CD4-positive, alpha-beta T cell (primary cell): ENCODE measurements at regions of chr6 and their contacts with region 1.

Region 1: DNA sequence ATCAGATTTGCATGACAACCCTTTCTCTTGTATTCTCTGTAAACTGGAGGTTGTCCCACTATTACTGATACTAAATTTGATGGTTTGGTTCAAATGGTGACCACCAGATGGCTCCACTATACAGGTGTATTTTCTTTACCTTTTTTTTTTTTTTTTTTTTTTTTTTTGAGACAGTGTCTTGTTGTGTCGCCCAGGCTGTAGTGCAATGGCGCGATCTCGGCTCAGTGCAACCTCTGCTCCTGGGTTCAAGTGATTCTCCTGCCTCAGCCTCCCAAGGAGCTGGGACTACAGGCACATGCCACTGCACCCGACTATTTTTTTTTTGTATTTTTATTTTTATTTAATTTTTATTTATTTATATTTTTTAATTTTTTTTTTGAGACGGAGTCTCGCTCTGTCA is 6.6 kb upstream of the WTAP start:
- DNase-seq: peak in 12 of 14 experiments; percentile 12 to 87 (median 29)
- ATAC-seq: peak; percentile 78
- H3K4me3 ChIP-seq: no peak overlapping the region
- H3K4me3 Mint-ChIP-seq: no peak overlapping the region
- H3K27ac ChIP-seq: no peak overlapping the region
- H3K27ac Mint-ChIP-seq: no peak overlapping the region
- H3K4me1 ChIP-seq: peaks cover 9% of the 10 kb centered on the region
- H3K4me1 Mint-ChIP-seq: peaks cover 30% of the 10 kb centered on the region
- H3K27me3 ChIP-seq: no peaks in the 10 kb centered on the region
- H3K27me3 Mint-ChIP-seq: no peaks in the 10 kb centered on the region
- CTCF ChIP-seq: peak; percentile 72

Region 2: DNA sequence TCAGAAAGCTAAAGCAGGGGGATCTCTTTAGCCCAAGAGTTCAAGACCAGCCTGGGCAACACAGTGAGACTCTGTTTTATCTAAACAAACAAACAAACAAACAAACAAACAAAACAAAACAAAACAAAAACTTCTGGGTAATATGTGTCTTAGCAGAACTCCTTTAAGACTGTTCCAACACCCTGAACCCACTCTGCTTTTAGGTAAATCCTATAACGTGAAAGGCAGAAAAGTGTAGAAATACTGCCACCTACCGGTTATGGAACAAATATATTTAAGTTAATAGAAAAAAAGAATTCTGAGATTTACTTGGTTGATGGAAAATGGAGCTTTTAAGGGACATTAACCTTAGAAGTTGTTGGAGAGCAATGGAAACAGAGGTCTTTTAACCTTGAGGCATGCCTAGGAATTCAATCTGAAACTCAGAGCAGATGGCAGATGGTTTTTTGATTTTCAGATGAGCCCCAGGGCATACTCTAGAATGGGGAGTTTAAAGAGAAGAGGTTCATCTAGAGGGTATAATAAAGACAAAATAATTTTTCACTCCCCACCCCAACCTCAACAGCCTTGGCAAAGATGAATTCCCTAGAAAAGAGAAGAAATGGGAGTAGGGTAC is 66.1 kb before region 1 on chr6:
- CTCF ChIA-PET with region 1: no interaction called
- POLR2A ChIA-PET with region 1: no interaction called
- intact Hi-C with region 1: no loop called
- DNase-seq: peak in 3 of 14 experiments; percentile 59 to 69 (median 65)
- ATAC-seq: no peak
- H3K4me3 ChIP-seq: no peak overlapping the region
- H3K4me3 Mint-ChIP-seq: no peak overlapping the region
- H3K27ac ChIP-seq: no peak overlapping the region
- H3K27ac Mint-ChIP-seq: no peak overlapping the region
- H3K4me1 ChIP-seq: no peaks in the 10 kb centered on the region
- H3K4me1 Mint-ChIP-seq: no peaks in the 10 kb centered on the region
- H3K27me3 ChIP-seq: no peaks in the 10 kb centered on the region
- H3K27me3 Mint-ChIP-seq: no peaks in the 10 kb centered on the region
- CTCF ChIP-seq: peak; percentile 79

Region 3: DNA sequence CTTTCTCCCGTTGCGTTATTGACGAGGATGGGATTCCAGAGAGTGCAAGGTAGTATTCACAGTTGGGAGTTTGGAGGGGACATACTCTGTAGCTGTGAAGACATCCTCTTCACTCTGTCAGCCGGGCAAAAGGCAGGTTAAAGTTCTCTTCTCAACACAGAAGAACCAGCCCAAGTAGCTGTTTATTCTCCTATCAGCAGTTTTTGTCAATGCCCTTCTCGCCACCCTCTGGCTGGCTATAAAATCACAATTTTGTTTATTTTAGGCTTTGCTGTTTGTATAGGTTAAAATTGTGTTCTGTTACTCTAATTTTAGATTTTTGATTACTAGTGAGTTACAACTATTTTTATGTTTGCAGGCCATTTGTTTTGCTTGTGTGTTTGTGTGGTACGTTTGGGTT is 132.2 kb after region 1 on chr6:
- CTCF ChIA-PET with region 1: interaction called, 4 read pairs
- POLR2A ChIA-PET with region 1: no interaction called
- intact Hi-C with region 1: loop called (anchors 1 to 2 kb)
- DNase-seq: peak in 7 of 14 experiments; percentile 4 to 53 (median 37)
- ATAC-seq: peak; percentile 67
- H3K4me3 ChIP-seq: no peak overlapping the region
- H3K4me3 Mint-ChIP-seq: no peak overlapping the region
- H3K27ac ChIP-seq: no peak overlapping the region
- H3K27ac Mint-ChIP-seq: no peak overlapping the region
- H3K4me1 ChIP-seq: no peaks in the 10 kb centered on the region
- H3K4me1 Mint-ChIP-seq: peaks cover 4% of the 10 kb centered on the region
- H3K27me3 ChIP-seq: no peaks in the 10 kb centered on the region
- H3K27me3 Mint-ChIP-seq: no peaks in the 10 kb centered on the region
- CTCF ChIP-seq: peak; percentile 43

Region 4: DNA sequence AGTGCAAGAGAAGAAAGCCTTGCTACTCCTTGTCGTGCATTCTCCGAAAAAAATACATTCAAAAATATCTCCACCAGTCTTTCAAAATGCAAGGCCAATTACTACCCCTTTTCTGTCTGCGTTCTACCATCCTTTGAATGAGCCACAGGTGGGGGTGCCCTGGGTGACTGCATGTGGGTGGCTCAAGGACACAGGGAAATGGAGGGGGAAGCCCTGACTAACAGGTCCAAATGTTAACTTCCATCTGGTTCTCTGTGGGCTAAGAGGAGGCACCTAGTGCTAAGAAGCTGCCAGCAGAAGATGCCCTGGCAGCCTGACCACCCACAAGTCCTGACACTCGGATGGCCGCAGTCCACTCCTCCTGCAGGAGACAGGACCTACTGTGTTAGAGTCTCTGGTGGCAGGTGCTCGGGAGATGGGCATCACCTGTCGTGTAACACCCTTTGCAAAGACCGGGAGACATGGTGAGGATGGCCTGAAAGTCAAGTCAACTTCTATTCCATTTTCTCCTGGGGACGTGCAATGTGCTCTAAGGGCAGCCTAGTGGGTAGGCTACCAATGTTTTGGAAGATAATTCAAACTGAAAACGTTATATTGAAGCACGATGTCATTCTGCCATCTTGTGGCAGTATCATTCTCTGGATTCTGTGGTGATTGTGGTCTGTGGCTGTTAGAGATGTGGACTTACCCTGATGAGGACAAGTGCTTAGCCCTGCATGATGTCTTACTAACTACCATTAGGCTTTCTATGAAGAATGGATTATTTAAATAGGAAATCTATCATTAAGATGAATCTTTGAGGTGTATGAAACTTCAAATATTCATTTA is 220.8 kb after region 1 on chr6:
- CTCF ChIA-PET with region 1: no interaction called
- POLR2A ChIA-PET with region 1: no interaction called
- intact Hi-C with region 1: loop called (anchors 1 kb)
- DNase-seq: peak in 8 of 14 experiments; percentile 5 to 80 (median 22)
- ATAC-seq: peak; percentile 82
- H3K4me3 ChIP-seq: no peak overlapping the region
- H3K4me3 Mint-ChIP-seq: no peak overlapping the region
- H3K27ac ChIP-seq: no peak overlapping the region
- H3K27ac Mint-ChIP-seq: no peak overlapping the region
- H3K4me1 ChIP-seq: peaks cover 4% of the 10 kb centered on the region
- H3K4me1 Mint-ChIP-seq: peaks cover 8% of the 10 kb centered on the region
- H3K27me3 ChIP-seq: no peaks in the 10 kb centered on the region
- H3K27me3 Mint-ChIP-seq: peaks cover 5% of the 10 kb centered on the region
- CTCF ChIP-seq: peak; percentile 46